ENCODE measurements at regions of chr1 and their contacts with region 1.

Region 1: DNA sequence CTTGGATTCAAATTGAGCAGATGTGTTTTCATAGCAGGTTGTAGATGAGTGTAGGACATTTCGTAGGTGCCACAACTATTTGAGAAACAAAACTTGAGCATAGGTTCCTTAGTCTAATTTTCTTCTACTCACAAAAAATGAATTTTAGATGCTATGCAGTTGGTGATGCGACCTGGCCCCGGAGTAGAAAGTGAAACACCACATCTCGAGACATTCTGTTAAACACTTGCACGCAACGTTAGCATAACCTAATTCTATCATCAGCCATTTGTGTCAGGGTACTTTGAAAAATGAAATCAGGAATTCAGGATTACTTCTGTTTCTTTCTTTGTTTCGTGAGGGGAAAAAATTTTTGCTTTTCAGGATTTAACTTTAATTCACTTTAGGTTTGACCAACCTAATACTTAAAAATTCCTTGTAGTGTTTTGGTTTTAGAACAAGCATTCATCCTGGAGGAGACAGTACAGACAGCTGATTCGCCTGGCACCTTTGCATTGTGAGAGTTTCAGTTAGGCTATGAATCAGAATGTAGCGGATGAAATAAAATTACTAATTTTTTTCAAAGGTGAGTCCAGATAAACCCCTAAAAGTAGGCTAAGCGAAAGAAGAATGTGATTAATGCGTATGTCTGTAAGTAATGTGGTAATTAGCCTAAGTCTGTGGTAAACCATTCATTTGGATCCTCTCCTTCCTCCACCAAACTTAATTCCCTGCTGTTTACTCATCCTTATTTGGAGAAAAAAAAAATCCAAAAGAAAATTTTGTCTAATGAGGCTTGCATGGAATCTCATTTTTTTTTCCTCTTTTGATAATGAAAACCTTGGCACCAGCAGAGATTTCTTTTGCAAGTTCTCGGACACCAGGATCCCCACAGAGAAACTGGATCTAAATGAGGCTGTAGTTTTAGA is 44.9 kb downstream of the MAP3K21 start:
- DNase-seq: no peak
- ATAC-seq: no peak
- H3K4me3 Mint-ChIP-seq: no peak overlapping the region
- H3K27ac Mint-ChIP-seq: no peak overlapping the region
- H3K4me1 Mint-ChIP-seq: no peaks in the 10 kb centered on the region
- H3K27me3 Mint-ChIP-seq: peaks cover 1% of the 10 kb centered on the region
- CTCF ChIP-seq: no peak

Region 2: GRCh38 chr1:233295237-233295974 is 77.1 kb before region 1 on chr1 and contains the start of gene PCNX2:
- CTCF ChIA-PET with region 1: no interaction called
- POLR2A ChIA-PET with region 1: no interaction called
- intact Hi-C with region 1: loop called (anchors 2 kb)
- DNase-seq: peak; percentile 79
- ATAC-seq: peak; percentile 88
- H3K4me3 Mint-ChIP-seq: peak within 1 kb of the TSS; percentile 88
- H3K27ac Mint-ChIP-seq: peak within 1 kb of the TSS; percentile 91
- H3K4me1 Mint-ChIP-seq: peaks cover 29% of the 10 kb centered on the region
- H3K27me3 Mint-ChIP-seq: no peaks in the 10 kb centered on the region
- CTCF ChIP-seq: no peak
- total RNA-seq, gene PCNX2: 14.4 to 14.9 TPM

Measured in activated CD8-positive, alpha-beta T cell treated with anti-CD3 and anti-CD28 coated beads for 36 hours (primary cell).